Body of pancreas (tissue), 4 donors: ENCODE measurements at regions of chr21 and their contacts with region 1.

Region 1: GRCh38 chr21:38355992-38356797 is 99.4 kb downstream of the KCNJ15 start:
- DNase-seq: peak; percentile 77 to 84 (median 80)
- ATAC-seq: peak; percentile 77
- H3K4me3 ChIP-seq: no peak overlapping the region
- H3K27ac ChIP-seq: no peak overlapping the region
- H3K4me1 ChIP-seq: no peaks in the 10 kb centered on the region
- H3K27me3 ChIP-seq: no peaks in the 10 kb centered on the region
- CTCF ChIP-seq: peak; percentile 91 to 97 (median 95)
- POLR2A ChIP-seq: no peak

Region 2: DNA sequence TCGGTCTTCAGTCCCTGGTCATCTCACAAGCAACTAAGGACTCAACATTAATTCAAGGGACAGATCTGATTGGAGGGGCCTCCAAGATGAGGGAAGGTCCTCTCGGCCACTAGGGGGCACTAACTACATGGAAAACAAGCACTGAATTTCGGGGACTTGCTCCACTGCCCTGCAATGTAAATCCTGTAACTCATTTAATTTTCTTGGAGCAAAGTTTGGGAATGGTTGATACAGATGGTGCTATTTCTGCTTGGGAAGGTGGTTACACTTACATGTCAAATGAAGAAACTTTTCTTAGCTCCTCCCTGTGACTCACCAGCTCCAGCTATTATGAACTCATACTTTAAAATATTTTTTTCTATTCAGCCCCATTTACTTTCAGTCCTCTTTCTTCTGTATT is 196.8 kb before region 1 on chr21:
- intact Hi-C with region 1: loop called (anchors 5 kb)
- DNase-seq: peak; percentile 71 to 79 (median 76)
- ATAC-seq: peak; percentile 60
- H3K4me3 ChIP-seq: no peak overlapping the region
- H3K27ac ChIP-seq: no peak overlapping the region
- H3K4me1 ChIP-seq: no peaks in the 10 kb centered on the region
- H3K27me3 ChIP-seq: no peaks in the 10 kb centered on the region
- CTCF ChIP-seq: peak; percentile 66 to 89 (median 81)
- POLR2A ChIP-seq: no peak

Region 3: GRCh38 chr21:38223893-38224540 is 132.2 kb before region 1 on chr21:
- intact Hi-C with region 1: loop called (anchors 5 kb)
- DNase-seq: no peak
- ATAC-seq: no peak
- H3K4me3 ChIP-seq: no peak overlapping the region
- H3K27ac ChIP-seq: no peak overlapping the region
- H3K4me1 ChIP-seq: peaks cover 25% of the 10 kb centered on the region
- H3K27me3 ChIP-seq: no peaks in the 10 kb centered on the region
- CTCF ChIP-seq: no peak
- POLR2A ChIP-seq: no peak

Region 4: DNA sequence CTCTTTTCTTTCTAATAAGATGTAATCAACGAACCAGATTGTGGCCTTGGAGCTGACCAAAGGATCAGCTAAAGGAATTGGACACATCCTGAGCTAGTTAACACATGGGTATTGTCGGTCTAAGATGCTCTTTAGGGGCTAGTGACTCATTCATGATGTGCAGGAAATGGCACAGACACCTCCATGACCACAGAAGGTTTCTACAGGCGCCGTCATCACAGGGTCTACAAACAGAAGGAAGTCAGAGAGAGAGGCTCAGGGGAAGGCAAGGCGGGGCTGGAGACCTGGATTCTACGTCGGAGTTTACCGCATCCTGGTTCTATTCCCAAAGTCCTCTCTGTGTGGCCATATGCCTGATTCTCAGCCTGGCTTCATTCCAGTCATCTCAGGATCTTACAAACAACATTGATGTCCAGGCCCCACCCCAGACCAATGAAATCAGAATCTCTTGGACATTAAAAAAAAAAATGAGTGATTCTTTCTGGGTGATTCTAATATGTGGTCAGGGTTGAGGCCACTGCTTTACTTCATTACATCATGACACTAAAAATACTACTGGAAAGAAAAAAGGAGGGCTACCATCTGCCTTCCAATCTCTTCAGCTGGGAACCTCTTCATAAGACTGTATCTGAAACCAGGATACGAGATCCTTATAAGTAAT is 111.2 kb before region 1 on chr21:
- intact Hi-C with region 1: no loop called
- DNase-seq: peak in 1 of 4 donors; percentile 41
- ATAC-seq: no peak
- H3K4me3 ChIP-seq: no peak overlapping the region
- H3K27ac ChIP-seq: no peak overlapping the region
- H3K4me1 ChIP-seq: peaks cover 14% of the 10 kb centered on the region
- H3K27me3 ChIP-seq: no peaks in the 10 kb centered on the region
- CTCF ChIP-seq: no peak
- POLR2A ChIP-seq: no peak

Region 5: GRCh38 chr21:38448677-38449385 is 92.6 kb after region 1 on chr21:
- intact Hi-C with region 1: no loop called
- DNase-seq: no peak
- ATAC-seq: no peak
- H3K4me3 ChIP-seq: no peak overlapping the region
- H3K27ac ChIP-seq: no peak overlapping the region
- H3K4me1 ChIP-seq: no peaks in the 10 kb centered on the region
- H3K27me3 ChIP-seq: no peaks in the 10 kb centered on the region
- CTCF ChIP-seq: no peak
- POLR2A ChIP-seq: no peak